H1 (cell line): ENCODE measurements at regions of chr4 and their contacts with region 1.

Region 1: GRCh38 chr4:187993827-187994226 is 1.7 kb upstream of the ZFP42 start:
- DNase-seq: peak in 1 of 2 experiments; percentile 86
- H3K4me3 ChIP-seq: no peak overlapping the region
- H3K27ac ChIP-seq: no peak overlapping the region
- H3K4me1 ChIP-seq: peaks cover 0 to 12% (median 5%) of the 10 kb centered on the region in 4 experiments; a peak in 5 of 7 replicates
- H3K27me3 ChIP-seq: no peaks in the 10 kb centered on the region
- CTCF ChIP-seq: peak in 2 of 3 experiments; percentile 48 to 59; a peak in 2 of 4 replicates
- EP300 ChIP-seq: no peak
- POLR2A ChIP-seq: no peak
- RAD21 ChIP-seq: peak; percentile 64 to 70

Region 2: GRCh38 chr4:187606581-187606980 is 387.2 kb before region 1 on chr4:
- CTCF ChIA-PET with region 1: interaction called, 11 read pairs
- POLR2A ChIA-PET with region 1: no interaction called
- DNase-seq: peak in 1 of 2 experiments; percentile 56
- H3K4me3 ChIP-seq: no peak overlapping the region
- H3K27ac ChIP-seq: no peak overlapping the region
- H3K4me1 ChIP-seq: no peaks in the 10 kb centered on the region; a peak in 1 of 7 replicates
- H3K27me3 ChIP-seq: no peaks in the 10 kb centered on the region
- CTCF ChIP-seq: peak; percentile 43 to 88 (median 76)
- EP300 ChIP-seq: no peak
- POLR2A ChIP-seq: no peak
- RAD21 ChIP-seq: peak; percentile 92 to 93

Region 3: DNA sequence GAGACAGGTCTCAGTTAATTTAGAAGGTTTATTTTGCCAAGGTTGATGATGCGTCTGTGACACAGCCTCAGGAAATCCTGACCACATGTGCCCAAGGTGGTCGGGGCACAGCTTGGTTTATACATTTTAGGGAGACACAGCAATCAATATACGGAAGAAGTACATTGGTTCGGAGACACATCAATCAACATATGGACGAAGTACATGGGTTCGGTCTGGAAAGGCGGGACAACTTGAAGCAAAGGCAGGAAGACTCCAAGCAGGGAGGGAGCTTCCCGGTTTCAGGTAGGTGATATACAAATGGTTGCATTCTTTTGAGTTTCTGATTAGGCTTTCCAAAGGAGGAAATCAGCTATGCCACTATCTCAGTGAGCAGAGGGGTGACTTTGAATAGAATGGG is 223.5 kb before region 1 on chr4:
- CTCF ChIA-PET with region 1: no interaction called
- POLR2A ChIA-PET with region 1: no interaction called
- DNase-seq: no peak
- H3K4me3 ChIP-seq: peak overlapping the region in 2 of 4 experiments; percentile 16 to 29; a peak in 3 of 8 replicates
- H3K27ac ChIP-seq: no peak overlapping the region
- H3K4me1 ChIP-seq: no peaks in the 10 kb centered on the region
- H3K27me3 ChIP-seq: no peaks in the 10 kb centered on the region; a peak in 1 of 7 replicates
- CTCF ChIP-seq: no peak
- EP300 ChIP-seq: no peak
- POLR2A ChIP-seq: no peak
- RAD21 ChIP-seq: no peak

Region 4: DNA sequence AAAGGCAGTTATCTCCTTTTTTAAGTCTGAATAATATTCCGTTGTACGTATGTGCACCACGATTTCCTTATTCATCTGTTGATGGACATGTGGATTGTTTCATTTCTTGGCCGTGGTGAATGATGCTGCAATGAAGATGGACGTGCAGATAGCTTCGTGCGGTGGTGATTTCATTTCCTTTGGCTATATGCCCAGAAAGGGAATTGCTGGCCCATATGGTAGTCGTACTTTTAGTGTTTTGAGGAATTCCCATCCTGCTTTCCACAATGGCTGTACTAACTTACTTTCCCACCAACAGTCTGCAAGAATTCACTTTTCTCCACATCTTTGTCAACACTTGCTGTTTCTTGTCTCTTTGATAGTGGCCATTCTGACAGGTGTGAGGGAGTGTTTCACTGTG is 14.5 kb after region 1 on chr4:
- CTCF ChIA-PET with region 1: interaction called, 3 read pairs
- POLR2A ChIA-PET with region 1: interaction called, 228 read pairs
- DNase-seq: no peak
- H3K4me3 ChIP-seq: no peak overlapping the region
- H3K27ac ChIP-seq: no peak overlapping the region
- H3K4me1 ChIP-seq: peaks cover 0 to 3% (median 0%) of the 10 kb centered on the region in 4 experiments; a peak in 2 of 7 replicates
- H3K27me3 ChIP-seq: no peaks in the 10 kb centered on the region
- CTCF ChIP-seq: no peak
- EP300 ChIP-seq: no peak
- POLR2A ChIP-seq: no peak; a peak in 1 of 3 replicates
- RAD21 ChIP-seq: no peak

Region 5: DNA sequence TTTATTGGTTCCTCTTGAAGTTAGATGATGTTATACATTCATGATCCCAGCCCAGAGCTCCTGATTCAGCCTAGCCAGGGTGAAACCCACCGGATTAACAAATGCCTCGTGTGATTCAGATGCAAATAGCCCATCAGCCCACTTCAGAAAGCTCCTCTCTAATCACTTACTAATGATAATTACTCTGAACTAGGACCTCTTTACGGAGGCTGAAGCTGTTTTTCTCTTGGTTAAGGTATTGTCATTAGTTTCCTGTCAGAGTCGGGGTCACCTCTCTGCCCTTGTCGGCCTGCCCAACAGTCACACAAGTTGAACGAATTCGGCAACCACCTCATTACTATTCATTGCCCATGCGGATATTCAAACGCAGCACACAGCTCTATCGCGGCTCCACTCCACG is 38.3 kb after region 1 on chr4:
- CTCF ChIA-PET with region 1: interaction called, 4 read pairs
- POLR2A ChIA-PET with region 1: interaction called, 22 read pairs
- DNase-seq: peak in 1 of 2 experiments; percentile 57
- H3K4me3 ChIP-seq: peak overlapping the region; percentile 14 to 51 (median 22); a peak in 5 of 8 replicates
- H3K27ac ChIP-seq: peak overlapping the region; percentile 87
- H3K4me1 ChIP-seq: peaks cover 9 to 12% (median 11%) of the 10 kb centered on the region in 4 experiments; a peak in 6 of 7 replicates
- H3K27me3 ChIP-seq: no peaks in the 10 kb centered on the region
- CTCF ChIP-seq: no peak
- EP300 ChIP-seq: peak in 1 of 2 experiments; percentile 35; a peak in 1 of 3 replicates
- POLR2A ChIP-seq: no peak; a peak in 2 of 3 replicates
- RAD21 ChIP-seq: no peak